ENCODE measurements at regions of chr2 and their contacts with region 1.

Region 1: GRCh38 chr2:70190418-70191243 is at the start of gene C2orf42:
- DNase-seq: peak; percentile 89 to 98 (median 92)
- ATAC-seq: peak; percentile 81
- H3K4me3 ChIP-seq: peak within 1 kb of the TSS; percentile 88
- H3K4me3 Mint-ChIP-seq: peak within 1 kb of the TSS; percentile 91
- H3K27ac ChIP-seq: peak within 1 kb of the TSS; percentile 95 to 98
- H3K27ac Mint-ChIP-seq: peak within 1 kb of the TSS; percentile 95
- H3K4me1 ChIP-seq: peaks cover 7% of the 10 kb centered on the region
- H3K4me1 Mint-ChIP-seq: peaks cover 12% of the 10 kb centered on the region
- H3K27me3 ChIP-seq: no peaks in the 10 kb centered on the region
- H3K27me3 Mint-ChIP-seq: no peaks in the 10 kb centered on the region
- CTCF ChIP-seq: peak; percentile 21
- total RNA-seq, gene C2orf42: 16.9 to 18.4 TPM

Region 2: DNA sequence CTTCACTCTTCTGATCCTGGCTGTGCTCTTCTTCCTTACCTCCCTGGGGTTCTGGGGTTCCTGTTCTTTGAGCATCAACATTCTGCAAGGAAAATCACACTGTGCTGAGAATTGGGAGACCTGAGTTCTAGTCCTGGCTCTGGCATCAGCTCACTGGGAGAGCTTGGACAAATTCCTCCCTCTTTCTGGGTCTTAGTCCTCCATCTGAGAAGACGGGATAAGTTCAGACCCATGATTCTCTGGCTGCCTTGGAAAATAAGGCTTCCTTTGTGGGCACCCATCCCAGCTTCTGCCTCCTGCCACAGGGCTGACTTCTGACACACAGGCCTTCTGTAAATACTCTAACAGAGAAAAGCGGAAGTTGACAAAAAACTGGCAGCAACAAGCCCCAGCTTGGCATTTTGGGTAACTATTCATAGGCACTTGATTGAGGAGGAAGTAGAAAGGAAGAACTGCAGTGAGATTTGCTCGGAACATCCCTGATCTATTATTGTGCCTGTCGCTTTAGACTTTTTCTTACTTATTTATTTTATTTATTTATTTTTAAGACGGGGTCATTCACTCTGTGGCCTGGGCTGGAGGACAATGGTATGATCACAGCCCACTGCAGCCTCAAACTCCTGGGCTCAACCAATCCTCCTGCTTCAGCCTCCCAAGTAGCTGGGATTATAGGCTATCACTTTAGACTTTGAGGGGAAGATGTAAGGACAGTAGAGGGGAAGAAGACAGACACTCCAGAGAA is 95.5 kb before region 1 on chr2:
- CTCF ChIA-PET with region 1: interaction called, 3 read pairs
- POLR2A ChIA-PET with region 1: interaction called, 10 read pairs
- intact Hi-C with region 1: no loop called
- DNase-seq: peak in 11 of 14 experiments; percentile 36 to 89 (median 53)
- ATAC-seq: peak; percentile 93
- H3K4me3 ChIP-seq: peak overlapping the region; percentile 43
- H3K4me3 Mint-ChIP-seq: peak overlapping the region; percentile 83
- H3K27ac ChIP-seq: peak overlapping the region; percentile 74 to 80
- H3K27ac Mint-ChIP-seq: peak overlapping the region; percentile 96
- H3K4me1 ChIP-seq: peaks cover 57% of the 10 kb centered on the region
- H3K4me1 Mint-ChIP-seq: peaks cover 46% of the 10 kb centered on the region
- H3K27me3 ChIP-seq: no peaks in the 10 kb centered on the region
- H3K27me3 Mint-ChIP-seq: no peaks in the 10 kb centered on the region
- CTCF ChIP-seq: no peak

Region 3: GRCh38 chr2:70124983-70125480 is 65.6 kb before region 1 on chr2:
- CTCF ChIA-PET with region 1: no interaction called
- POLR2A ChIA-PET with region 1: interaction called, 26 read pairs
- intact Hi-C with region 1: no loop called
- DNase-seq: peak; percentile 57 to 88 (median 62)
- ATAC-seq: peak; percentile 59
- H3K4me3 ChIP-seq: peak overlapping the region; percentile 83
- H3K4me3 Mint-ChIP-seq: peak overlapping the region; percentile 93
- H3K27ac ChIP-seq: peak overlapping the region; percentile 92 to 99
- H3K27ac Mint-ChIP-seq: peak overlapping the region; percentile 99
- H3K4me1 ChIP-seq: peaks cover 72% of the 10 kb centered on the region
- H3K4me1 Mint-ChIP-seq: peaks cover 76% of the 10 kb centered on the region
- H3K27me3 ChIP-seq: no peaks in the 10 kb centered on the region
- H3K27me3 Mint-ChIP-seq: no peaks in the 10 kb centered on the region
- CTCF ChIP-seq: no peak

Region 4: GRCh38 chr2:70132244-70133126 is 58.1 kb before region 1 on chr2:
- CTCF ChIA-PET with region 1: no interaction called
- POLR2A ChIA-PET with region 1: interaction called, 15 read pairs
- intact Hi-C with region 1: no loop called
- DNase-seq: peak in 8 of 14 experiments; percentile 34 to 80 (median 60)
- ATAC-seq: peak; percentile 62
- H3K4me3 ChIP-seq: peak overlapping the region; percentile 54
- H3K4me3 Mint-ChIP-seq: peak overlapping the region; percentile 83
- H3K27ac ChIP-seq: peak overlapping the region; percentile 76 to 84
- H3K27ac Mint-ChIP-seq: peak overlapping the region; percentile 96
- H3K4me1 ChIP-seq: peaks cover 88% of the 10 kb centered on the region
- H3K4me1 Mint-ChIP-seq: peaks cover 72% of the 10 kb centered on the region
- H3K27me3 ChIP-seq: no peaks in the 10 kb centered on the region
- H3K27me3 Mint-ChIP-seq: no peaks in the 10 kb centered on the region
- CTCF ChIP-seq: no peak

Region 5: DNA sequence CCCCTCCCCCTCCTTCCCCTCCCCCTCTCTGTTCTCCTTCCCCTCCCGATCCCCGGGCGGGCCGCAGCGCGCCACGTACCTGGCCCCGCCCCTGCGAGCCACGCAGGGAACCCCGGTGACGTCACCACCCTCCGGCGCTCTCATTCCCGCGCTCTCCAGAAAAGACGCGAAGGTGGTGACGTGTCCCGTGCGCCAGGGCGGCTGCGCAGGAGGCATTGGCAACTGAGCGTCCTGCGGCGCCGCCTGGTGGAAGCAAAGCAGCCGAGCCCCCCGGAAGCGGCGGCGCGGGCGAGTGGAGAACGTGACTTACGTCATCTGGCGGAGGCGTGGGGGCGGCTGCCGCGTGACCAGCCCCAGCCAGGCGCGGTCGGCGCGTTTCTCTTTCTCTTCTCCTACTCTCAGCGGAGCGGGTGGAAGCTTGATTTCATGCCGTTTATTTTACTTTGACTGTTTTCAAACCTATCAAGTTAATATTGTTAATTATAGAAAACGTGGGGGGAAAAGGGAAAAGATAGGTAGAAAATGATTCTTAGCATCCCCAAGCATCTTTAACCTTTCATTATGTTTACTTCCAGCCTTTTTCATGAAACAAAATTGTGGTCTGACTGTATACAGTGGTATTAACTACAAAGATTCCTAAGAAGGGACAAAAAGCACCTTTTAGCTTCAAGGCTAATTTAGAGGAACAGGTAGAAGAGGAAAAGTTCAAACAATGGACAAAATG is 47.9 kb before region 1 on chr2:
- CTCF ChIA-PET with region 1: interaction called, 11 read pairs
- POLR2A ChIA-PET with region 1: interaction called, 50 read pairs
- intact Hi-C with region 1: loop called (anchors 2 kb)
- DNase-seq: peak; percentile 98 to 100 (median 100)
- ATAC-seq: peak; percentile 74
- H3K4me3 ChIP-seq: peak overlapping the region; percentile 65
- H3K4me3 Mint-ChIP-seq: peak overlapping the region; percentile 99
- H3K27ac ChIP-seq: peak overlapping the region; percentile 97 to 99
- H3K27ac Mint-ChIP-seq: peak overlapping the region; percentile 99
- H3K4me1 ChIP-seq: peaks cover 60% of the 10 kb centered on the region
- H3K4me1 Mint-ChIP-seq: peaks cover 54% of the 10 kb centered on the region
- H3K27me3 ChIP-seq: no peaks in the 10 kb centered on the region
- H3K27me3 Mint-ChIP-seq: no peaks in the 10 kb centered on the region
- CTCF ChIP-seq: peak; percentile 86

Region 6: DNA sequence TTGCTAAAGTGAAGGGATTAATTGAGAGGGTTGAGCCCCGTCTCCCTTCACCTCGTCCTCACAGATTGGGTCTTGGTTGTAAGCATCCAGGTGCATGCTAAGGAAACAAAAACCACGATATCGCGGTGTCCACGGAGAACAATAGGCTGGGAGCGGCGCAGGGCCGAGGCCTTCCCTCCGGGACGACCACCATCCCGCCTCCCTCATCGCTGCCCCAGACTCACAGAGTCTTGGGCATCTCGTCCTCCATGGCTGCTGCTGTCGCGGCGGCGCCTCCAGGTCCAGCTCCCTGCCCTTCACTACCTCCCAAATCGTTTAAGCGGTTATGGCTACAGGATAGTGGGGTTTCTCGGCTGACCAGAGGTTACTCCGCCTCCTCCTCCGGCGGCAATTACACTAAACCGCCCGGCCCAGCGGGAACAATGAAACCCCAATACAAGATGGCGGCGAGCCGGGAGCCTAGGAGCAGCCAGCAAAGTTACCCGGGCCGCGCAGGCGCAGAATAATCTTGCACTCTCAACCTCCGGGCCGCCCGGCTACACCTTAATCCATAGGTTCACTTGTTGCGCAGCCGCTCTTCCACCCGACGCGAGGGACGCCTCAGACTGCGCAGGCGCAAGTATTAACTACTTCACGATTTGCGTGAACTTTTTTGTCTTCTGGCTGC is 57.7 kb after region 1 on chr2 and contains the start of gene TIA1:
- CTCF ChIA-PET with region 1: no interaction called
- POLR2A ChIA-PET with region 1: interaction called, 16 read pairs
- intact Hi-C with region 1: loop called (anchors 2 kb)
- DNase-seq: peak; percentile 96 to 100 (median 98)
- ATAC-seq: peak; percentile 96
- H3K4me3 ChIP-seq: peak within 1 kb of the TSS; percentile 85
- H3K4me3 Mint-ChIP-seq: peak within 1 kb of the TSS; percentile 97
- H3K27ac ChIP-seq: peak within 1 kb of the TSS; percentile 85 to 97
- H3K27ac Mint-ChIP-seq: peak within 1 kb of the TSS; percentile 96
- H3K4me1 ChIP-seq: peaks cover 31% of the 10 kb centered on the region
- H3K4me1 Mint-ChIP-seq: peaks cover 47% of the 10 kb centered on the region
- H3K27me3 ChIP-seq: no peaks in the 10 kb centered on the region
- H3K27me3 Mint-ChIP-seq: peaks cover 7% of the 10 kb centered on the region
- CTCF ChIP-seq: no peak
- total RNA-seq, gene TIA1: 34.4 to 45.3 TPM

Region 7: DNA sequence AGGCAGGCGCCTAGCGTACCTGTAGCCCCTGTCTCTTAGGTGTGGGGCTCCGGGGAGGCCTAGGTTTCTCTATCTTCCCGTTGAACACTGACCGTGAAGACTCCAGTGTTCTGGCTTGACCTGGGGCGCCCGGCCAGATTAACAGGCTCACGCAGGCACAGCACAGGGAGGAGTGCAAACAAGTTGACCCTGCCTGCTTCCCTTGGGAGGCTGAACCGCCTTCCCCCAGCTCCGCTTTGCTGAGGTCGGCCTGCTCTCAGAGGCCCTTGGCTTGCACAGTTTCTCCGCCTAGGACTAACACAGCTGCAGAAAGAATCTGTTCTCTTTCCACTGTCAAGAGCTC is 67.9 kb after region 1 on chr2:
- CTCF ChIA-PET with region 1: no interaction called
- POLR2A ChIA-PET with region 1: interaction called, 36 read pairs
- intact Hi-C with region 1: no loop called
- DNase-seq: peak in 3 of 14 experiments; percentile 2 to 37 (median 11)
- ATAC-seq: no peak
- H3K4me3 ChIP-seq: peak overlapping the region; percentile 73
- H3K4me3 Mint-ChIP-seq: peak overlapping the region; percentile 95
- H3K27ac ChIP-seq: peak overlapping the region in 1 of 2 donors; percentile 45
- H3K27ac Mint-ChIP-seq: peak overlapping the region; percentile 86
- H3K4me1 ChIP-seq: peaks cover 20% of the 10 kb centered on the region
- H3K4me1 Mint-ChIP-seq: peaks cover 42% of the 10 kb centered on the region
- H3K27me3 ChIP-seq: no peaks in the 10 kb centered on the region
- H3K27me3 Mint-ChIP-seq: no peaks in the 10 kb centered on the region
- CTCF ChIP-seq: no peak

Region 8: GRCh38 chr2:70381831-70382267 is 191.2 kb after region 1 on chr2:
- CTCF ChIA-PET with region 1: no interaction called
- POLR2A ChIA-PET with region 1: no interaction called
- intact Hi-C with region 1: no loop called
- DNase-seq: no peak
- ATAC-seq: no peak
- H3K4me3 ChIP-seq: no peak overlapping the region
- H3K4me3 Mint-ChIP-seq: no peak overlapping the region
- H3K27ac ChIP-seq: no peak overlapping the region
- H3K27ac Mint-ChIP-seq: no peak overlapping the region
- H3K4me1 ChIP-seq: no peaks in the 10 kb centered on the region
- H3K4me1 Mint-ChIP-seq: no peaks in the 10 kb centered on the region
- H3K27me3 ChIP-seq: no peaks in the 10 kb centered on the region
- H3K27me3 Mint-ChIP-seq: no peaks in the 10 kb centered on the region
- CTCF ChIP-seq: no peak

Measured in CD4-positive, alpha-beta T cell (primary cell).